Activated CD4-positive, alpha-beta T cell treated with anti-CD3 and anti-CD28 coated beads, Interleukin-2, amount 10 ng/mL, durations not matched to agents 24 days and 14 days (primary cell): ENCODE measurements at regions of chr13 and their contacts with region 1.

Region 1: GRCh38 chr13:44197791-44198770 is 175.5 kb upstream of the SERP2 start:
- DNase-seq: peak; percentile 78
- H3K4me3 Mint-ChIP-seq: no peak overlapping the region
- H3K27ac Mint-ChIP-seq: peak overlapping the region; percentile 34
- H3K4me1 Mint-ChIP-seq: peaks cover 28% of the 10 kb centered on the region
- H3K27me3 Mint-ChIP-seq: peaks cover 43% of the 10 kb centered on the region

Region 2: DNA sequence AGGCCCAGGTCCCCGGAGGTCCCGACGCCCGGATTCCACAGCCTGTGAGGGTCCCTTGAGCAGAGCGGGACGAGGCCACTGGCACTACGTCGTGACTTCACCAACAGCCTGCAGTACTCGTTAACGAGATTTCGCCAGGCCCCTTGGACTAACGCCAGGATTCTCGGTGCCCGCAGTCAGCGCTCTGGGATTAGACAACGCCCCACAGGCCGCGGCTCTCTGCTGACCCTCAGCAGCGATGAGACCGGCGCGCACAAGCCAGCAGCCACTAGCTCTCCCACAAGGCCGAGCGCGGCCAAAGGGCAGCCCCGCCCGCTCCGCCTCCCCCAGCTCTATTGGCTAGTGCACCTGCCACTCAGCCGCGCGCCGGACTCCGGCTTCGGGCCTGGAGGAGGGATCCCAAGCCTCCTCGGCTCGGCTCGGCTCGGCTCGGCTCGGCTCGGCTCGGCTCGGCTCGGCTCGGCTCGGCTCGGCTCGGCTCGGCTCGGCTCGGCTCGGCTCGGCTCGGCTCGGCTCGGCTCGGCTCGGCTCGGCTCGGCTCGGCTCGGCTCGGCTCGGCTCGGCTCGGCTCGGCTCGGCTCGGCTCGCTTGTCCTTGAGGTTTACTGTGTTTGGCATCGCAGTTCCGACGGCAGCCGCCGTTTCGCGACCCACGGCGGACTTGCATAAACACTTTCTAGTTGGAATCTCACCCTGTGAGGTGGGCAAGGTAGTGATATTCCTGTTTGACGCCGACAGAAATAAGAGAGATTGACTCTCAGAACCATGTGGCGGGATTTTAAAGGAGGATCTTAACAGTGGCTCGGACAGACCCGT is 56.1 kb before region 1 on chr13:
- intact Hi-C with region 1: loop called (anchors 5 kb)
- DNase-seq: peak; percentile 99
- H3K4me3 Mint-ChIP-seq: peak overlapping the region; percentile 87
- H3K27ac Mint-ChIP-seq: peak overlapping the region; percentile 83
- H3K4me1 Mint-ChIP-seq: peaks cover 16% of the 10 kb centered on the region
- H3K27me3 Mint-ChIP-seq: peaks cover 30% of the 10 kb centered on the region

Region 3: DNA sequence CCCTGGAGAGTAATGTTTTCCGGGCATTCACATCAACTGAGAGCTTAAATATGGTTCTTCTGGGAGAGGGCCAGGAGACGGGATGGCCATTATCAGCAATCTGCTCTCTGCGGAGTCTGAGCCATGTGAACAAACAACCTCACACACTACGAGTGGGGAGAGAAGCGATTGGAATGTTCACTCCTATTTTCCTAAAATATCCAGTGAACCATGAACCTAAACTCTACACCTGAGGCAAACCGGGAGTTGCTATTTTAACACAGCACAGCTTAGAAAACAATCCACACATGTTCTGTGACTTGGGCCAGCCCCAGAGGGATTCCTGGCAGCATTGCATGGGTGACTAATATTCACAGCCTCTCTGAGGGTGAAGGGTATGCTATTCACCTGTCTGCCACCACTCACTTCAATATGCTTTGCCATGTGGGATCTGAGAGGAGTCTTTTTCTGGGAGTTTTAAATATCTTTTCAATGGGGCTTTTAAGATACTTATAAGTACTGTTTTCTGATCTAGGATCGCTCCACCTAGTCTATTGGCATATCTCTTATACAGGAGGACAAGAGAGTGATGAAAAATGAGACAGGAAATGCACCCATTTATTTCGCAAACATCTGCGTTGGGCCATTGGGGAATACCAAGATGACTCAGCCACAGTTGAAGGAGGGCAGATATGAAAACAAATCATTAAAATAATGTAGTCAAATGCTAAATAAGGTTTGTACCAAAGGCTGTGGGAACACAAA is 103.0 kb after region 1 on chr13:
- intact Hi-C with region 1: loop called (anchors 5 kb)
- DNase-seq: peak; percentile 63
- H3K4me3 Mint-ChIP-seq: peak overlapping the region; percentile 23
- H3K27ac Mint-ChIP-seq: peak overlapping the region; percentile 72
- H3K4me1 Mint-ChIP-seq: peaks cover 28% of the 10 kb centered on the region
- H3K27me3 Mint-ChIP-seq: no peaks in the 10 kb centered on the region

Region 4: GRCh38 chr13:44734201-44734707 is 536.2 kb after region 1 on chr13:
- intact Hi-C with region 1: no loop called
- DNase-seq: no peak
- H3K4me3 Mint-ChIP-seq: no peak overlapping the region
- H3K27ac Mint-ChIP-seq: no peak overlapping the region
- H3K4me1 Mint-ChIP-seq: no peaks in the 10 kb centered on the region
- H3K27me3 Mint-ChIP-seq: peaks cover 11% of the 10 kb centered on the region